ENCODE measurements at regions of chr3 and their contacts with region 1.

Region 1: GRCh38 chr3:46845791-46846623 is 17.2 kb downstream of the MYL3 start:
- DNase-seq: peak; percentile 85
- ATAC-seq: peak; percentile 87
- H3K4me3 Mint-ChIP-seq: peak overlapping the region; percentile 67
- H3K27ac Mint-ChIP-seq: no peak overlapping the region
- H3K4me1 Mint-ChIP-seq: peaks cover 9% of the 10 kb centered on the region
- H3K27me3 Mint-ChIP-seq: no peaks in the 10 kb centered on the region

Region 2: GRCh38 chr3:46536758-46537157 is 309.2 kb before region 1 on chr3:
- CTCF ChIA-PET with region 1: no interaction called
- POLR2A ChIA-PET with region 1: no interaction called
- intact Hi-C with region 1: no loop called
- DNase-seq: no peak
- ATAC-seq: no peak
- H3K4me3 Mint-ChIP-seq: no peak overlapping the region
- H3K27ac Mint-ChIP-seq: no peak overlapping the region
- H3K4me1 Mint-ChIP-seq: peaks cover 53% of the 10 kb centered on the region
- H3K27me3 Mint-ChIP-seq: no peaks in the 10 kb centered on the region

Region 3: GRCh38 chr3:46705022-46705530 is 140.9 kb before region 1 on chr3:
- CTCF ChIA-PET with region 1: interaction called, 5 read pairs
- POLR2A ChIA-PET with region 1: no interaction called
- intact Hi-C with region 1: loop called (anchors 2 to 10 kb)
- DNase-seq: peak; percentile 80
- ATAC-seq: peak; percentile 81
- H3K4me3 Mint-ChIP-seq: no peak overlapping the region
- H3K27ac Mint-ChIP-seq: no peak overlapping the region
- H3K4me1 Mint-ChIP-seq: peaks cover 8% of the 10 kb centered on the region
- H3K27me3 Mint-ChIP-seq: peaks cover 1% of the 10 kb centered on the region

Region 4: DNA sequence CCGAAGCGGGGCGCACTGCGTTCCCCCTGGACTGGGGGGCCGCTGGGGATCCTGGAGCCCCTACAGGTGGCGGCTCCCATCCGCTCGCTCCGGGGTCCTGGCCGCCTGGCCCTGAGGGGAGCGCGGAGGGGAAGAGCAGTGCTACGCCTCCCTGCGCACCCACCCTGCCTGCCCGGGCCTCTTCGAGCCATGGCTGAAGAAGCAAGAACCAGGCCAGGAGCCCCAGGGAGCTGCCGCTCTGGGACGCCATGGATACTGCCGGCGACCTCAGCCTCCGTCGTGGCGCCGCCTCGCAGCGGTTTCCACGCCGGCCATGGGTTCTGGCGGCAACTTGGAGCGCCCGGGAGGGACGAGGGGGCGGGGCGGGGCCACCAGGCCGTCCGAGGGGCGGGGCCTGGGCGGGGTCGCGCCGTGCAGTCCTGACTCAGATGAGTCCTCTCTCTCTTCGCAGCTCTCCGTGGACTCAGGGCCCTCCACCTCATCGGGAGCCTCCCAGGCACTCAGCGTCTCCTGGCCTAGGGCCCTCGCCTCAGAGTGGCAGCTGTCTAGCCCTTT is 33.7 kb before region 1 on chr3:
- CTCF ChIA-PET with region 1: interaction called, 3 read pairs
- POLR2A ChIA-PET with region 1: no interaction called
- intact Hi-C with region 1: loop called in 1 of 2 experiments (anchors 1 kb)
- DNase-seq: peak; percentile 87
- ATAC-seq: peak; percentile 95
- H3K4me3 Mint-ChIP-seq: peak overlapping the region; percentile 45
- H3K27ac Mint-ChIP-seq: no peak overlapping the region
- H3K4me1 Mint-ChIP-seq: peaks cover 11% of the 10 kb centered on the region
- H3K27me3 Mint-ChIP-seq: peaks cover 6% of the 10 kb centered on the region

Region 5: GRCh38 chr3:46895204-46895660 is 49.2 kb after region 1 on chr3:
- CTCF ChIA-PET with region 1: interaction called, 4 read pairs
- POLR2A ChIA-PET with region 1: no interaction called
- intact Hi-C with region 1: loop called in 1 of 2 experiments (anchors 1 kb)
- DNase-seq: peak; percentile 86
- ATAC-seq: peak; percentile 74
- H3K4me3 Mint-ChIP-seq: no peak overlapping the region
- H3K27ac Mint-ChIP-seq: no peak overlapping the region
- H3K4me1 Mint-ChIP-seq: peaks cover 4% of the 10 kb centered on the region
- H3K27me3 Mint-ChIP-seq: peaks cover 35% of the 10 kb centered on the region

Region 6: DNA sequence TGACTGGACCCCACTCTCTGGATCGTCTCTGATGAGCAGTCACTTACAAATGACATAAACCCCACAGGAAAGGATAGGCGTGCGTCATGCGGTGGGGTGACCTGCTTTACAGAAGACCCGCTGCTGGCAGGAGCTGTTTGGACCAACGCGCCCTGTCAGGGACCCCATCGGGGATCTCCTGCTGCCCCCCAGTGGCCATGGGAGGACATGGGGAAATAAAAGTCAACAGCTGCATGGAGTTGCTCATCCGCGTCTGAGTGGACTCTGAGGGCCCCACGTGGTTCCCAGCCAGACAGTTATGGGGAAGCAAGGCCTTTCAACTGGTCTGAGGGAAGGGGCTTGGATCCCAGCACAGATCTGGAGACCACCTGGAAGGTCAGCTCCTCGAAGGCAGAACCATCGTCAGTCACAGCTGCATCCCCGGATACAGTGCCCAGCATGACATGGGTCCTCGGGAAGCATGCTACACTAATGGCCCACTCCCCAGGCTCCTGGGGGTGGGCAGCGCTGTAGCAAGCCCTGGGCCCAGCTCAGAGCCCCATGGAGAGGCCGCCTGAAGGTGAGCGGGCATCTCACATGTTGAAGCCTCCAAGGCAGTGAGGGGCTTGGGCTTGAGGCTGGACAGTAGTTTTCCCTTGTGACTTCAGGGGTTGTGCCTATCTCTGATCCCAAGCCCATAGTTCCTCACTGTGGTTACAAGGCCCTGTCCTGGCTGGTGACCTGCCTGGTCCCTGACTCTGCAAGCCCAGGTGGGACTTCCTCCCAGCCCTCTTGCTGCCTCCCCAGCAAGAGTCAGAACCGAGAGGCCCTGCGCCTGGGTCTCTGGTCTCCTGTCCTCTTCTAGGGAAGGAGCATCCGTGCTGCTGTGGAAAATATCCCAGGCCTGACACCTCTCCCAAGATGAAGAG is 63.8 kb after region 1 on chr3:
- CTCF ChIA-PET with region 1: interaction called, 6 read pairs
- POLR2A ChIA-PET with region 1: interaction called, 8 read pairs
- intact Hi-C with region 1: loop called in 1 of 2 experiments (anchors 2 kb)
- DNase-seq: peak; percentile 91
- ATAC-seq: peak; percentile 96
- H3K4me3 Mint-ChIP-seq: no peak overlapping the region
- H3K27ac Mint-ChIP-seq: no peak overlapping the region
- H3K4me1 Mint-ChIP-seq: peaks cover 18% of the 10 kb centered on the region
- H3K27me3 Mint-ChIP-seq: no peaks in the 10 kb centered on the region

Region 7: GRCh38 chr3:47370887-47371697 is 525.1 kb after region 1 on chr3:
- CTCF ChIA-PET with region 1: no interaction called
- POLR2A ChIA-PET with region 1: no interaction called
- intact Hi-C with region 1: loop called in 1 of 2 experiments (anchors 5 kb)
- DNase-seq: peak; percentile 69
- ATAC-seq: peak; percentile 55
- H3K4me3 Mint-ChIP-seq: no peak overlapping the region
- H3K27ac Mint-ChIP-seq: no peak overlapping the region
- H3K4me1 Mint-ChIP-seq: no peaks in the 10 kb centered on the region
- H3K27me3 Mint-ChIP-seq: peaks cover 2% of the 10 kb centered on the region

Measured in activated CD4-positive, alpha-beta T cell treated with anti-CD3 and anti-CD28 coated beads for 36 hours (primary cell).